K562 (cell line): ENCODE measurements at regions of chr11 and their contacts with region 1.

Region 1: GRCh38 chr11:47992959-47993820 is 12.8 kb downstream of the PTPRJ start:
- DNase-seq: peak; percentile 66 to 90 (median 75)
- ATAC-seq: peak; percentile 93
- H3K4me3 ChIP-seq: no peak overlapping the region
- H3K27ac ChIP-seq: peak overlapping the region; percentile 49; the same call in 2 of the 3 replicates
- H3K4me1 ChIP-seq: peaks cover 33 to 34% of the 10 kb centered on the region in 2 experiments
- H3K27me3 ChIP-seq: no peaks in the 10 kb centered on the region
- CTCF ChIP-seq: no peak
- EP300 ChIP-seq: peak; percentile 73; the same call in 1 of the 2 replicates
- POLR2A ChIP-seq: no peak
- RAD21 ChIP-seq: no peak; a peak in 1 of 4 replicates

Region 2: GRCh38 chr11:47847892-47848635 is 145.1 kb before region 1 on chr11 and contains the start of gene NUP160:
- CTCF ChIA-PET with region 1: no interaction called
- POLR2A ChIA-PET with region 1: no interaction called
- in situ Hi-C with region 1: no loop called
- intact Hi-C with region 1: no loop called
- DNase-seq: peak; percentile 87 to 92 (median 89)
- ATAC-seq: peak; percentile 92
- H3K4me3 ChIP-seq: peak within 1 kb of the TSS; percentile 77
- H3K27ac ChIP-seq: peak within 1 kb of the TSS; percentile 97
- H3K4me1 ChIP-seq: peaks cover 0 to 20% of the 10 kb centered on the region in 2 experiments; a peak in 4 of 5 replicates
- H3K27me3 ChIP-seq: no peaks in the 10 kb centered on the region
- CTCF ChIP-seq: no peak
- EP300 ChIP-seq: no peak
- POLR2A ChIP-seq: peak; percentile 96
- RAD21 ChIP-seq: no peak
- polyA plus RNA-seq, gene NUP160: 44.5 to 60.2 TPM

Region 3: GRCh38 chr11:47979378-47980244 is 13.6 kb before region 1 on chr11:
- CTCF ChIA-PET with region 1: no interaction called
- POLR2A ChIA-PET with region 1: interaction called, 14 read pairs
- in situ Hi-C with region 1: no loop called
- intact Hi-C with region 1: no loop called
- DNase-seq: no peak
- ATAC-seq: peak; percentile 5
- H3K4me3 ChIP-seq: peak overlapping the region; percentile 61
- H3K27ac ChIP-seq: no peak overlapping the region
- H3K4me1 ChIP-seq: peaks cover 26 to 28% of the 10 kb centered on the region in 2 experiments
- H3K27me3 ChIP-seq: peaks cover 0 to 2% of the 10 kb centered on the region in 2 experiments; a peak in 1 of 5 replicates
- CTCF ChIP-seq: 0 out of 6 replicates have a peak, but pooled peaks of 2 of the 3 experiments have one; percentile 20 to 23
- EP300 ChIP-seq: no peak
- POLR2A ChIP-seq: no peak
- RAD21 ChIP-seq: no peak; a peak in 1 of 4 replicates

Region 4: GRCh38 chr11:48006301-48006992 is 13.3 kb after region 1 on chr11:
- CTCF ChIA-PET with region 1: no interaction called
- POLR2A ChIA-PET with region 1: interaction called, 21 read pairs
- in situ Hi-C with region 1: no loop called
- intact Hi-C with region 1: no loop called
- DNase-seq: peak; percentile 38 to 67 (median 56)
- ATAC-seq: peak; percentile 64
- H3K4me3 ChIP-seq: no peak overlapping the region
- H3K27ac ChIP-seq: peak overlapping the region; percentile 35; the same call in 2 of the 3 replicates
- H3K4me1 ChIP-seq: peaks cover 34 to 38% of the 10 kb centered on the region in 2 experiments
- H3K27me3 ChIP-seq: no peaks in the 10 kb centered on the region
- CTCF ChIP-seq: no peak
- EP300 ChIP-seq: peak; percentile 59; the same call in 1 of the 2 replicates
- POLR2A ChIP-seq: no peak
- RAD21 ChIP-seq: no peak

Region 5: DNA sequence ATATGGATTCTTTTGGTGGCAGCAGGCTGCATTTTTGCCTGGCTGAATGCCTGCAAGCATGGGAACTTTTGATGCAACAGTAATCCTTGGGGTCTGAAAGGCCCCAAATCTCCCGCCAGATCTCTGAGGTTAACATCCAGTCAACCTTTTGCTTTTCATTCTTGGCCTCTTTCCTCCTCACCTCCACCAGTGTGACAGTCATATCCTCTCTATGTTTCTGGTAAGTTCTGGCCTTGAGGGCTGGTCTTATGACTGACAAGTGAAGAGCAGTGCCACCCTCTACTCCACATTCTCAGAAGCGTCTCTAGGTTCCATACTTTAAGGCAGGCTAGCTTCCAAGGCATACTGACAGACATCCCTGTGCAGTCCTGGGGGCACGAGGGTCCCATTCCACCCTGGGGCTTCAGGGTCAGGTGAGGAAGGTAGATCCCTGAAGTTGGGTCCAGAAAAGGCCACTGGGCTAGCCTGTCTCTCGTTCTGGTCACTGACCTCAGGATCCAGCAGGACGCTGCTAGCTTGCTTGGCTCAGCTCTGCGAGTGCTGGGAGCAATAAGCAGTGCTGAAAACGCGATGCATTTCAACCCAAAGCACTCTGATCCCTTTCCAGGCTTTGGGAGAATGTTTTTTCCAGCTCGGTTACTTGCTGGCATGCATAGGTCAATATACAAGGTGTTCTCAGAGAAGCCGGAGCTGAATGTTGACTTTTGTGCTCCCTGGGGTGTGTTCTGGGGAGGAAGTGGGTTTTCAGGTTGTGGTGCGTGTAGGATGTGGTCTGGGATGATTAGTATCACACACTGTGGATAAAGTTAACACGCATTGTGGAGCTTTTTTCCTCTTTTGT is 62.3 kb after region 1 on chr11:
- CTCF ChIA-PET with region 1: no interaction called
- POLR2A ChIA-PET with region 1: interaction called, 3 read pairs
- in situ Hi-C with region 1: no loop called
- intact Hi-C with region 1: loop called (anchors 2 kb)
- DNase-seq: peak in 2 of 4 experiments; percentile 29 to 56
- ATAC-seq: peak; percentile 74
- H3K4me3 ChIP-seq: no peak overlapping the region
- H3K27ac ChIP-seq: peak overlapping the region; percentile 54
- H3K4me1 ChIP-seq: peaks cover 32 to 40% of the 10 kb centered on the region in 2 experiments
- H3K27me3 ChIP-seq: no peaks in the 10 kb centered on the region
- CTCF ChIP-seq: no peak
- EP300 ChIP-seq: peak; percentile 70
- POLR2A ChIP-seq: no peak
- RAD21 ChIP-seq: no peak